ENCODE measurements at regions of chr3 and their contacts with region 1.

Region 1: GRCh38 chr3:25463836-25464418 is 35.9 kb downstream of the RARB start:
- DNase-seq: no peak
- H3K4me3 ChIP-seq: no peak overlapping the region
- H3K27ac ChIP-seq: no peak overlapping the region
- H3K4me1 ChIP-seq: peaks cover 1% of the 10 kb centered on the region
- H3K27me3 ChIP-seq: no peaks in the 10 kb centered on the region
- CTCF ChIP-seq: no peak
- EP300 ChIP-seq: no peak
- POLR2A ChIP-seq: no peak

Region 2: GRCh38 chr3:25445731-25446130 is 18.2 kb before region 1 on chr3:
- intact Hi-C with region 1: loop called in 1 of 4 experiments (anchors 2 kb)
- DNase-seq: no peak
- H3K4me3 ChIP-seq: no peak overlapping the region
- H3K27ac ChIP-seq: no peak overlapping the region
- H3K4me1 ChIP-seq: no peaks in the 10 kb centered on the region
- H3K27me3 ChIP-seq: no peaks in the 10 kb centered on the region
- CTCF ChIP-seq: no peak
- EP300 ChIP-seq: no peak
- POLR2A ChIP-seq: no peak

Region 3: GRCh38 chr3:25633919-25634318 is 170.0 kb after region 1 on chr3:
- intact Hi-C with region 1: no loop called
- DNase-seq: no peak
- H3K4me3 ChIP-seq: no peak overlapping the region
- H3K27ac ChIP-seq: no peak overlapping the region
- H3K4me1 ChIP-seq: peaks cover 2% of the 10 kb centered on the region
- H3K27me3 ChIP-seq: no peaks in the 10 kb centered on the region
- CTCF ChIP-seq: no peak
- EP300 ChIP-seq: no peak
- POLR2A ChIP-seq: no peak